PC-9 (cell line): ENCODE measurements at regions of chr5 and their contacts with region 1.

Region 1: DNA sequence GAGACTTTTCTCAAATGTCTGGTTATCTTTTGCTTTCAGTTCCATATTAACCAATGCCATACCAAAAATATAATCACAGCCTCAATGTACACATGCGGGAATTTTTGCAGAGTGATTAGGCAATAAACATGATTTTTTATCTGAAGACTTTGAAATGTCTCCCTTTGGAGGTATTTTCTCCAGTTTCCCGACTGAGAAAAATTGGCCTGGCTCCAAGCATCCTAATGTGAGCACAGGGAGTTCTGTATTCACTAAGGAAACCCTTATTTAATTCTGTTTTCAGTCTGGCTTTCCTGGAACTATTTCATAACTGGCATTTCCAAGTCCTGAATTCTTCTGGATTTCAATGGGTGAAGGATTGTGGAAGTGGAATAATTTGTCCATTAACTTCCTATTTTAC is 8.5 kb downstream of the HCN1 start:
- DNase-seq: no peak
- H3K4me3 ChIP-seq: no peak overlapping the region
- H3K27ac ChIP-seq: no peak overlapping the region
- H3K4me1 ChIP-seq: no peaks in the 10 kb centered on the region
- H3K27me3 ChIP-seq: no peaks in the 10 kb centered on the region
- CTCF ChIP-seq: no peak

Region 2: GRCh38 chr5:45399041-45399440 is 288.7 kb before region 1 on chr5:
- CTCF ChIA-PET with region 1: no interaction called
- POLR2A ChIA-PET with region 1: no interaction called
- intact Hi-C with region 1: loop called (anchors 10 kb)
- DNase-seq: no peak
- H3K4me3 ChIP-seq: no peak overlapping the region
- H3K27ac ChIP-seq: no peak overlapping the region
- H3K4me1 ChIP-seq: no peaks in the 10 kb centered on the region
- H3K27me3 ChIP-seq: no peaks in the 10 kb centered on the region
- CTCF ChIP-seq: no peak

Region 3: DNA sequence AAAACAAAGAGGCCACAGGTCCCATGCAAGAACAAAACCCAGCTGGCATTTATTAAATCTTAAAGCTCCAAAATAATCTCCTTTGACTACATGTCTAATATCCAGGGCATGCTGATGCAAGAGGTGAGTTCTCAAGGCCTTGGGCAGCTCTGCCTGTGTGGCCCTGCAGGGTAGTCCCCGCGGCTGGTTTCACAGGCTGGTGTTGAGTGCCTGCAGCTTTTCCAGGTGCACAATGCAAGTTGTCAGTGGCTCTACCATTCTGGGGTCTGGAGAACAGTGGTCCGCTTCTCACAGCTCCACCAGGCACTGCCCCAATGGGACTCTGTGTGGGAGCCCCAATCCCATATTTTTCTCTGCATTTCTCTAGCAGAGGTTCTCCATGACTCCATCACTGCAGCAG is 62.9 kb after region 1 on chr5:
- CTCF ChIA-PET with region 1: no interaction called
- POLR2A ChIA-PET with region 1: no interaction called
- intact Hi-C with region 1: no loop called
- DNase-seq: no peak
- H3K4me3 ChIP-seq: no peak overlapping the region
- H3K27ac ChIP-seq: no peak overlapping the region
- H3K4me1 ChIP-seq: no peaks in the 10 kb centered on the region
- H3K27me3 ChIP-seq: no peaks in the 10 kb centered on the region
- CTCF ChIP-seq: no peak